ENCODE measurements at regions of chr17 and their contacts with region 1.

Region 1: DNA sequence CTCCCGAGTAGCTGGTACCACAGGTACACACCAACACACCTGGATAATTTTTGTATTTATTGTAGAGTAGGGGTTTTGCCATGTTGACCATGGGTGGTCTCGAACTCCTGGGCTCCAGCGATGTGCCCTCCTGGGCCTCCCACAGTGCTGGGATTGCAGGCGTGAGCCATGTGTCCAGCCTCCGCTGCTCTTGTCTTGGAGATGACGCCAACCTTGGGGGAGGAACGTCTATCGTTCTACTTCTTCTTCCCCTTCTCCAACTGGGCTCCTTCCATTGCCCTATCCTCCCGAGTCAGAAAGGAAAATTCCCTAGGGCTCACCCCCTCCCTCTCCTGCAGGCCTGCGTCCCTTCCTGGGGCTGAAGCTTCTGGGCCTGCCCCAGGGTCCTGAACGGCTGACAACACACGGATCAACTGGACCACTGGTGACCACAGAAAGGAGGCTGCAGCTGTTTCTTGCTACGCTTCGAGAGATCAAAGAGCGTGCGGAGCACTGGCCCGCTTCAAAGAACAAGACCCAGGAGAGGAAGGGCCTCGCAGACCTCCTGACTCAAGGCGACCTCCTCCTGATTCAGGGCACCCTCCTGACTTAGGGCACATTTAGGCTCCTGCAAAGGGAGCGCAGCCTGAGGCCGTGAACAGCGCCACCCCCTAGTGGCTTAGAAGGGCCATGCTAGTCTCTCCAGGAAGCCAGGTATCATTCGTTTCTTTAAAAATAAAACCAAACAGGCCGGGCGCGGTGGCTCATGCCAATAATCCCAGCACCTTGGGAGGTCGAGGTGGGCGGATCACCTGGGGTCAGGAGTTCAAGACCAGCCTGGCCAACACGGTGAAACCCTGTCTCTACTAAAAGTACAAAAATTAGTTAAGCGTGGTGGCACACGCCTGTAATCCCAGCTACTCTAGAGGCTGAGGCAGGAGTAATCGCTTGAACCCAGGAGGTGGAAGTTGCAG is 48.5 kb upstream of the HELZ start:
- DNase-seq: peak; percentile 18
- ATAC-seq: peak; percentile 93
- H3K4me3 ChIP-seq: no peak overlapping the region
- H3K27ac ChIP-seq: no peak overlapping the region
- H3K4me1 ChIP-seq: no peaks in the 10 kb centered on the region
- H3K27me3 ChIP-seq: no peaks in the 10 kb centered on the region
- CTCF ChIP-seq: peak; percentile 88

Region 2: DNA sequence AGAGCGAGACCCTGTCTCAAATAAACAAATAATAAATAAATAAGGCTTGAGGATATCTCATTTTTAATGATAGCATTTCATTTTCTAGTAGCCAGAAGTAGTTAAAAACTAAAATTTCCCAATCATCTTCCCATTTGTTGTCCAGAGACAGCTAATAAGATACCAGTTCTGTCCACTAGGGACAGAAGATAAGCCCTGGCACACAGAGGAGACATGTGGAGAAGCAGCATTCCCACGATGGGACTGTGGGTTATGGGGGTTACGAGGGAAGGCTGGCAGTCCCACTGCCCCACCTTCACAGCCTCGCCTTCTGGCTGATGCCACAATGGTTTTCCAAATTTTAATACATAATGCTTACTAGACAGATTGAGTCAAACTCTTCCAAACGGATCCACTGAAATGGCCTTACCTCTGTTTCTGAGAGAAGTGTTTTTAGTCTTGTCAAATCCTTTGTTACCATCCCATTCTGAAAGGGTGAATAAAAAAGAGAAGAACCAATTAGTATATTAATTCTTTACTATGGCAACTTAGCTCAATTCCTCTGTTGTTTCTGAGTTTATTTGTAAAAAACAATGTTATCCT is 92.7 kb before region 1 on chr17:
- CTCF ChIA-PET with region 1: interaction called, 16 read pairs
- POLR2A ChIA-PET with region 1: no interaction called
- in situ Hi-C with region 1: no loop called
- intact Hi-C with region 1: no loop called
- DNase-seq: no peak
- ATAC-seq: peak; percentile 69; the same call in 1 of the 2 replicates
- H3K4me3 ChIP-seq: no peak overlapping the region
- H3K27ac ChIP-seq: no peak overlapping the region
- H3K4me1 ChIP-seq: no peaks in the 10 kb centered on the region
- H3K27me3 ChIP-seq: no peaks in the 10 kb centered on the region
- CTCF ChIP-seq: peak; percentile 61

Region 3: DNA sequence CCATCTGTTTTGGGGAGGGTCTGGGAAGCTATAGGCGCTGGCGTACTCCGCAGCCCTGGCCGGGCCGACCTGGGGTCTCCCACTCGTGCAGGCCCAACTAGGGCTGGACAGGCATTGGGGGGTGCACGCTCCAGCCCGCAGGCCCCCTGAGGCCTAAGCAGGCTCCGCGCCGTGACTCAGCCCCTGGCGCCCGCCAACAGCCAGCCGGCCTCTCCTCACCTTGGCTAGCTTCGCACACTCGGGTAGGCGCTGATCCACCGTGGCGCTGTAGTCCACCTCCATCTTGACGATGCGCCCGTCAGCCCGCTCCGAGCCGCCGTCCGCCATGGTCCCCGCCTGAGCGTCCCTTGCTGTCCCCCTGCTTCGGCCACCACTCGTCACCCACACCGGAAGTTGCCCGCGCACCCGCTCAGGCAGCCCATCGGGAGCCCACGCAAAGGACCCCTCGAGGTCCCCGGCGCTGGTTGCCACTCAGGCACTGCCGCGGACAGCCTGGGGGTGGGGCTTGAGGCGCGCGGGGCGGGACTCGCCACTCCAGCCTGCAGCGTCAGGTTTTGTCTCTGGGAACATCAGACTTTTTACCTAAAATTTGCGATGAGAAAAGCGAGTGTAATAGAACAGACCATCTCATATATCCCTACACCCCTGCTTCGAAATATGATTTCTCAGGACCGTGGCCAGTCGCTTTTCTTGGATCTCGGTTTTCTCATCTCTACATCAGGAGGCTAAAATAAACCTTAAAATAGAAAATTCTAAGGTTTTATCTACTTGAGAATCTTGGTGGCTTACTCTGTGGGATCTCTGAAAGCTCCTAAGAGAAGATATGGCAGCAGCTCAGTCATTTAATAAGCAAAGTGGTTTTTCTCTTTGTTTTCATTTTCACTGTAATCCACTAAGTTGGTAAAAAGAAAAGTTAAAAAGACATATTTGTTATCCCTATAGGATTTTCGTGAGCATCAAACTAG is 72.9 kb after region 1 on chr17 and contains the start of gene PSMD12:
- CTCF ChIA-PET with region 1: interaction called, 10 read pairs
- POLR2A ChIA-PET with region 1: no interaction called
- in situ Hi-C with region 1: no loop called
- intact Hi-C with region 1: no loop called
- DNase-seq: no peak
- ATAC-seq: peak; percentile 97
- H3K4me3 ChIP-seq: peak within 1 kb of the TSS; percentile 86 to 94
- H3K27ac ChIP-seq: peak within 1 kb of the TSS; percentile 94
- H3K4me1 ChIP-seq: peaks cover 12% of the 10 kb centered on the region
- H3K27me3 ChIP-seq: no peaks in the 10 kb centered on the region
- CTCF ChIP-seq: no peak
- total RNA-seq, gene PSMD12: 50.2 TPM

Region 4: GRCh38 chr17:67824735-67825626 is 531.5 kb after region 1 on chr17 and contains the start of gene BPTF:
- CTCF ChIA-PET with region 1: no interaction called
- POLR2A ChIA-PET with region 1: no interaction called
- in situ Hi-C with region 1: no loop called
- intact Hi-C with region 1: no loop called
- DNase-seq: peak; percentile 24
- ATAC-seq: peak; percentile 96
- H3K4me3 ChIP-seq: peak within 1 kb of the TSS; percentile 70 to 77
- H3K27ac ChIP-seq: peak within 1 kb of the TSS; percentile 73
- H3K4me1 ChIP-seq: no peaks in the 10 kb centered on the region; the same call in 1 of the 2 replicates
- H3K27me3 ChIP-seq: no peaks in the 10 kb centered on the region
- CTCF ChIP-seq: peak; percentile 93
- total RNA-seq, gene BPTF: 51.1 TPM